GM12878 (cell line): ENCODE measurements at regions of chr22 and their contacts with region 1.

Region 1: GRCh38 chr22:46542011-46542985 is 4.9 kb upstream of the CELSR1 start:
- DNase-seq: peak; percentile 21
- ATAC-seq: peak; percentile 96
- H3K4me3 ChIP-seq: no peak overlapping the region
- H3K27ac ChIP-seq: no peak overlapping the region
- H3K4me1 ChIP-seq: no peaks in the 10 kb centered on the region; the same call in 1 of the 2 replicates
- H3K27me3 ChIP-seq: peaks cover 0 to 10% of the 10 kb centered on the region in 2 experiments; a peak in 1 of 4 replicates
- CTCF ChIP-seq: peak; percentile 95 to 99 (median 96)
- EP300 ChIP-seq: no peak
- POLR2A ChIP-seq: no peak
- RAD21 ChIP-seq: peak; percentile 94

Region 2: DNA sequence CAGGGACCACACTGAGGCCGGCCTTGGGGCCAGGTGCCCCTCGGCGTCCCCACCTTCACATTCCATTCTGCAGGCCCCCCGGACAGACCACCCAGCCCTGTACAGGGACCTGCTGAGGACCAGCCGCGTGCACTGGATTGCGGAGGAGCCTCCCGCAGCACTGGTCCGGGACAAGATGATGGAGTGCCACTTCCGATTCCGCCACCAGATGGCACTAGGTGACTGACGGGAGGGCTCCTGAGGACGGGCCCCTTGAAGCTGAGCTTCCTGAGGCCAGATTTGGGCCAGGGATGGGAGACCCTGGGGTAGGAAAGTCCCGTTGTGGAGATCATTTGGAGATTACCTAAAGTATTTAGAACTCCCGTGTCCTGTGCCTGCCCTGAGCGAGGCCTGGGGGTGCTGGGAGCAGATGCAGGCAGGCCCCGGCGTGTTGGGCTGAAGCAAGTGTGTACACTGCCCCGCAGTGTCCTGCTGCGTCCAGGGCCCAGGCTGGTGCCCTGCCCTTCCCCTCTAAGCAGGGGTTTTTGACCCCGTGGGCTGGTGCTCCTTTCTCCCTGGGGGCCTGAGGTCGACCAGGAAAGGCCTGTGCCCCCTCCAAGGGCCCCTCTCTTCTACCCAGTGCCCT is 186.8 kb before region 1 on chr22:
- CTCF ChIA-PET with region 1: interaction called, 15 read pairs
- POLR2A ChIA-PET with region 1: no interaction called
- RAD21 ChIA-PET with region 1: interaction called, 8 read pairs
- SMC1A ChIA-PET with region 1: interaction called, 3 read pairs
- in situ Hi-C with region 1: no loop called
- intact Hi-C with region 1: loop called (anchors 1 kb)
- DNase-seq: no peak
- ATAC-seq: peak; percentile 92
- H3K4me3 ChIP-seq: no peak overlapping the region
- H3K27ac ChIP-seq: no peak overlapping the region
- H3K4me1 ChIP-seq: no peaks in the 10 kb centered on the region
- H3K27me3 ChIP-seq: no peaks in the 10 kb centered on the region
- CTCF ChIP-seq: peak; percentile 73 to 89 (median 74)
- EP300 ChIP-seq: no peak
- POLR2A ChIP-seq: no peak; the same call in 1 of the 2 replicates
- RAD21 ChIP-seq: peak; percentile 71

Region 3: DNA sequence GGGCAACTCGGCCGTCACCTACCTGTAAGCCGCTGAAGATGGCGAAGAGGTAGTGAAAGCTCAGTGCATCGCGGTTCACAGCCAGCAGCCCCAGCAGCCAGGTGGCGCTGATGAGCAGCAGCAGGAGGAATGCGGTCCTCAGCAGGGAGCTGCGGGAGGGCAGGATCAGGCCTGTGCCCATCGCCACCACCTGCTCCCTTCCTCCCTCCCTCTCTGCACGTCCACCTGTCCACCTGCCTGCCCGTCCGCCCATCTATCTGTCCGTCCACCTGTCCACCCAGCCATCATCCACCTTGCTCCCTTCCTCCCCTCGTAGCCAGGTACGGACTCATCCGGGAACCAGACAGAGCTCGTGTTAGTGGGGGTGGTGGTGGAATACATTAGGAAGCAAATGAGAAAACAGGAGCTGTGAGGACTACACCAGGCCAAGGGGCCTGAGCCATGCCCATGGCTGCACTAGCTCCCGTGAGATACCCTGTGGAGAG is 174.5 kb before region 1 on chr22:
- CTCF ChIA-PET with region 1: interaction called, 141 read pairs
- POLR2A ChIA-PET with region 1: interaction called, 3 read pairs
- RAD21 ChIA-PET with region 1: interaction called, 56 read pairs
- SMC1A ChIA-PET with region 1: interaction called, 44 read pairs
- in situ Hi-C with region 1: loop called (anchors 5 kb)
- intact Hi-C with region 1: loop called (anchors 1 kb)
- DNase-seq: no peak
- ATAC-seq: peak; percentile 93
- H3K4me3 ChIP-seq: no peak overlapping the region
- H3K27ac ChIP-seq: no peak overlapping the region
- H3K4me1 ChIP-seq: no peaks in the 10 kb centered on the region
- H3K27me3 ChIP-seq: no peaks in the 10 kb centered on the region
- CTCF ChIP-seq: peak; percentile 89 to 99 (median 92); a peak in 5 of 6 replicates
- EP300 ChIP-seq: no peak
- POLR2A ChIP-seq: no peak
- RAD21 ChIP-seq: peak; percentile 74